GM12878 (cell line): ENCODE measurements at regions of chr9 and their contacts with region 1.

Region 1: GRCh38 chr9:126860077-126860756 is at the start of gene ZBTB34:
- DNase-seq: no peak
- ATAC-seq: peak; percentile 75
- H3K4me3 ChIP-seq: peak within 1 kb of the TSS; percentile 83
- H3K27ac ChIP-seq: peak within 1 kb of the TSS; percentile 89
- H3K4me1 ChIP-seq: peaks cover 9% of the 10 kb centered on the region
- H3K27me3 ChIP-seq: peaks cover 0 to 2% of the 10 kb centered on the region in 2 experiments; a peak in 1 of 4 replicates
- CTCF ChIP-seq: peak; percentile 91 to 100 (median 97)
- EP300 ChIP-seq: no peak
- POLR2A ChIP-seq: peak; percentile 91
- RAD21 ChIP-seq: peak; percentile 41
- polyA plus RNA-seq, gene ZBTB34: 0.71 to 2.2 TPM

Region 2: DNA sequence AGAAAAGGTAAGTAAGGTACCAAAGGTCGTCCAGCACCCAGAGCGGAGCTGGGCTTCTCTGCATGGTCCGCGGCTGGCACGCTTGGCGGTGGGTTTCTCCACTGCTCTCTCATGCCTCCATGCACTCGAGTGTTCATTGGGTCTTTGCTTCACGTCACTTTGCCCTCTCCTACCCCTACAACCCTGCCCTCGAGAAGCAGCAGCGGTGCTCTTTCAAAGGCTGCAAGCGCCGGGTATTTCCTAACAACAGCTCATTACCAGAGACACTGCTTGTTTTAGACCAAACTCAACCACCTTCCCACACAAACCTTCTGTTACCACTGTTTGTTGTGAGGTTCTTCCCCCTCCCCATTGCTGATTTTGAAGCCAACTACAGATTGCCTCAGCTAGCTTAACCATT is 21.3 kb before region 1 on chr9:
- CTCF ChIA-PET with region 1: interaction called, 16 read pairs
- POLR2A ChIA-PET with region 1: interaction called, 12 read pairs
- RAD21 ChIA-PET with region 1: interaction called, 7 read pairs
- SMC1A ChIA-PET with region 1: interaction called, 11 read pairs
- in situ Hi-C with region 1: no loop called
- intact Hi-C with region 1: no loop called
- DNase-seq: peak; percentile 81
- ATAC-seq: peak; percentile 84
- H3K4me3 ChIP-seq: no peak overlapping the region; the same call in 1 of the 2 replicates
- H3K27ac ChIP-seq: peak overlapping the region; percentile 91
- H3K4me1 ChIP-seq: peaks cover 65% of the 10 kb centered on the region
- H3K27me3 ChIP-seq: no peaks in the 10 kb centered on the region
- CTCF ChIP-seq: no peak
- EP300 ChIP-seq: peak; percentile 59 to 79; a peak in 3 of 4 replicates
- POLR2A ChIP-seq: no peak
- RAD21 ChIP-seq: no peak

Region 3: DNA sequence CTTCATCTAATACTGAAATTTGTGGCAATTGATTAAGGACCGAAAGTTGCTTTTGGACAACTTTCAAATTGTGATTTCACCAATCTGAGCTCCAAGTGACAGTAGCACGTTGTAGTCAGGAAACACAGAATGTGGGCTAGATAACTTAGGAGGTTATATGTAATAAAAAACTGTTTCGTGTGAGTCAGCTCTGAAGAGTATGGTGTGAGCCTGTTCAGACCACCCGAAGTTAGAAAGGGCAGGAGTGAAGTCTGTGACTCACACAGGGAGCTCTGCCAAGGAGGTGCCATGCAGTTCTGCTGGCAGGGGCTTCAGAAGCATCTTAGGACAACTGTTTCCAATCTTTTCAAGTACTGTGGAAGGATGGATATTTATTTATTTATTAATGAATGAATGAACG is 16.1 kb before region 1 on chr9:
- CTCF ChIA-PET with region 1: interaction called, 16 read pairs
- POLR2A ChIA-PET with region 1: interaction called, 12 read pairs
- RAD21 ChIA-PET with region 1: interaction called, 7 read pairs
- SMC1A ChIA-PET with region 1: interaction called, 11 read pairs
- in situ Hi-C with region 1: no loop called
- intact Hi-C with region 1: no loop called
- DNase-seq: no peak
- ATAC-seq: no peak
- H3K4me3 ChIP-seq: no peak overlapping the region
- H3K27ac ChIP-seq: no peak overlapping the region
- H3K4me1 ChIP-seq: peaks cover 24% of the 10 kb centered on the region
- H3K27me3 ChIP-seq: no peaks in the 10 kb centered on the region
- CTCF ChIP-seq: no peak
- EP300 ChIP-seq: no peak
- POLR2A ChIP-seq: no peak
- RAD21 ChIP-seq: no peak

Region 4: DNA sequence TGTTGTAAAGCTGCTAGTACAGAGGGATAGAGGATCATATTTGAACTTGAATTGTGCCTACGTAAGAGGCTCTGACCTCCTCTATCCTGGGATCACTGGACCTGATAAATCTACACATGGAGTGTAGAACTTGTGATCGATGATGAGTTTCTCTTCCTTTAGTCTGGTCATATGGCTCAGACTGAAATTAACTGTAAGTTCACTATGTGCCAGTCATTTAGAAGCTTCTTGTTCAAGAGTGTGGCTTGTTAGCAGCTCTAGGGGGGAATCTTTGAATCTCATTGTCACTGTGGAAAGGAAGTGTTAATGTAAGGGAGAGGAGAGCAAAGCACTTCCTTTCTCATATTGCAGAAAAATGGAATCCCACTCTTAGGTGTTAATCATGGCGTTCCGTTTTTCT is 12.3 kb after region 1 on chr9:
- CTCF ChIA-PET with region 1: interaction called, 8 read pairs
- POLR2A ChIA-PET with region 1: interaction called, 14 read pairs
- RAD21 ChIA-PET with region 1: interaction called, 3 read pairs
- SMC1A ChIA-PET with region 1: interaction called, 19 read pairs
- in situ Hi-C with region 1: no loop called
- intact Hi-C with region 1: no loop called
- DNase-seq: peak; percentile 40
- ATAC-seq: peak; percentile 88
- H3K4me3 ChIP-seq: no peak overlapping the region
- H3K27ac ChIP-seq: peak overlapping the region; percentile 65
- H3K4me1 ChIP-seq: peaks cover 16% of the 10 kb centered on the region
- H3K27me3 ChIP-seq: no peaks in the 10 kb centered on the region
- CTCF ChIP-seq: no peak
- EP300 ChIP-seq: no peak
- POLR2A ChIP-seq: no peak
- RAD21 ChIP-seq: no peak